ENCODE measurements at regions of chr17 and their contacts with region 1.

Region 1: GRCh38 chr17:50501054-50501453 is 7.2 kb upstream of the MYCBPAP start:
- DNase-seq: peak; percentile 55
- H3K4me3 ChIP-seq: no peak overlapping the region
- H3K27ac ChIP-seq: no peak overlapping the region
- H3K4me1 ChIP-seq: no peaks in the 10 kb centered on the region
- H3K27me3 ChIP-seq: no peaks in the 10 kb centered on the region
- CTCF ChIP-seq: peak; percentile 69
- EP300 ChIP-seq: no peak
- RAD21 ChIP-seq: peak; percentile 53

Region 2: DNA sequence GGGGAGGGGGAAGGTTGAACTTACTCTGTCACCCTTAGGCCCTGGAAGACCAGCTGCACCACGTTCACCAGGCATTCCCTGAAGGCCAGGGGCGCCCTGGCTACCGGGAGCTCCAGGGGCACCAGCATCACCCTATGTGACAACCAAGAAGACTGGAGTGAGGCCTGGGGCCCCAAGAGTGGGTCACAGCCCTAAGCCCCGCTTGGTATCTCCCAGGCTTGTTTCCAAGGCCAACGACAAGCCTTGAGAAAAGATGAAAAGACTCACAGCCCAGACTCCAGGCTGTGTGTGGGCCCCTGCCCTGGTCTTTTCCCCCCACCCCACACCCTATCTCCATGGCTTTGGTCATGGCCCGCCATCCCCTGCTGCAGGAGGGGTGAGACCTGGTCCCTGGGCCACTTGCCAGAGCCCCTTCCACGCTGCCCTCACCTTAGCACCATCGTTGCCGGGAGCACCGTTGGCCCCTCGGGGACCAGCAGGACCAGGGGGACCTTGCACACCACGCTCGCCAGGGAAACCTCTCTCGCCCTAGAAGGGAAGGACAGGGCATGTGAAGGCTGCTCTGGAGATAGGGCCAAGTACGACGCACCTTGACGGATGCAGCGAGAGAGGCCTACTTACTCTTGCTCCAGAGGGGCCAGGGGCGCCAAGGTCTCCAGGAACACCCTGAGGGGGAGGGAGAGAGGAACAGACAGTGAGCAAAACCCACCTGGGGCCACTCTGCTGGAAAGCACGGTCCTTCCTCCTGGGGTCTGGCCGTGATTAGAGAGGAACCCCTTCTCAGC is 309.5 kb before region 1 on chr17:
- CTCF ChIA-PET with region 1: no interaction called
- POLR2A ChIA-PET with region 1: no interaction called
- DNase-seq: no peak
- H3K4me3 ChIP-seq: no peak overlapping the region
- H3K27ac ChIP-seq: peak overlapping the region; percentile 5 to 100; a peak in 3 of 4 replicates
- H3K4me1 ChIP-seq: peaks cover 0 to 29% of the 10 kb centered on the region in 2 experiments; a peak in 2 of 4 replicates
- H3K27me3 ChIP-seq: no peaks in the 10 kb centered on the region
- CTCF ChIP-seq: no peak
- EP300 ChIP-seq: no peak
- RAD21 ChIP-seq: no peak

Region 3: GRCh38 chr17:50318501-50319285 is 182.4 kb before region 1 on chr17:
- CTCF ChIA-PET with region 1: no interaction called
- POLR2A ChIA-PET with region 1: no interaction called
- DNase-seq: no peak
- H3K4me3 ChIP-seq: no peak overlapping the region
- H3K27ac ChIP-seq: no peak overlapping the region
- H3K4me1 ChIP-seq: no peaks in the 10 kb centered on the region; a peak in 1 of 4 replicates
- H3K27me3 ChIP-seq: no peaks in the 10 kb centered on the region
- CTCF ChIP-seq: no peak
- EP300 ChIP-seq: no peak
- RAD21 ChIP-seq: no peak

Region 4: GRCh38 chr17:50361561-50362480 is 139.2 kb before region 1 on chr17:
- CTCF ChIA-PET with region 1: interaction called, 10 read pairs
- POLR2A ChIA-PET with region 1: no interaction called
- DNase-seq: peak; percentile 90
- H3K4me3 ChIP-seq: no peak overlapping the region; a peak in 1 of 4 replicates
- H3K27ac ChIP-seq: peak overlapping the region in 1 of 2 experiments; percentile 59; a peak in 2 of 4 replicates
- H3K4me1 ChIP-seq: peaks cover 9 to 25% of the 10 kb centered on the region in 2 experiments; a peak in 2 of 4 replicates
- H3K27me3 ChIP-seq: no peaks in the 10 kb centered on the region
- CTCF ChIP-seq: peak; percentile 92
- EP300 ChIP-seq: no peak
- RAD21 ChIP-seq: peak; percentile 66

Region 5: DNA sequence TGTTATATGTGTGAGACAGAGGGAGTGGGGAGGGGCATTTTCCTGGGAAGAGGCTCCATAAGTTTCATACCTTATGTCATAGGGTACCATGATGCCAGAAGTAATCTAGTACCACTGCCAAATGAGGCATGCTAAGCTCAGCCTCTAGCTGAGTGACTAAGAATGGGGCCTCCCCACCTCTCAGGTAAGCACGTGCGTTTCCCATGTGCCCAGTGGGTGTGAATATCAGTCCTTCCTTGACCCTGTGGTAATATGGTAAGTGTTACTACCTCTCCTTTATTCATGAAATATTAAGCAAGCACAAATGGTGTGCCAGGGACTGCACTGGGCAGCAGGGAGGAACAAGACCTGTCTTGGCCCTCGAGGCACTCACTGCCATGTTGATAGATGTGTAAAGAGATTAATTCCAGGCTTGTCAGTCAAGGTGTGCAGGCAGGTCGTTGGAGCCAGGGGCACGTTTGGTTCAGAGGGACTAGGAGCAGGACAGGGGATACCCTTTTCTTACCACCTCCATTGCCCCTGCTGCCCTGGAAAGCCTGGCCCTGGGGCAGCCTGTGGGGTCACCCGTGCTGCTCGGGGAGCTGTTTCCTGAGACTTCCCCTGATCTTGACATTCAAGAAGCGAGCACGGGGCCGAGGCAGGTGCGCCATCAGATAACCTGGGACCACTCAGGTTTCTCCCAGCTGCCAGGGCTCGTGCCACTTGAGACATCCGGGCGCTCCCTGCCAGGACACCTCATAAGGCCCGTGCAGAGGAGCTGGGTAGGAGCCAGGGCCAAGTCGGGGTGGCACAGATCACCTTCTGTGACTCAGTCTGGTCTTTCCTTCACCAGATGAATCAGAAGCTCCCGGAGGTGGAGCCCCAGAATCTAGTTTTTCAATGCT is 13.6 kb before region 1 on chr17:
- CTCF ChIA-PET with region 1: interaction called, 183 read pairs
- POLR2A ChIA-PET with region 1: no interaction called
- DNase-seq: no peak
- H3K4me3 ChIP-seq: no peak overlapping the region
- H3K27ac ChIP-seq: no peak overlapping the region
- H3K4me1 ChIP-seq: peaks cover 0 to 12% of the 10 kb centered on the region in 2 experiments; a peak in 3 of 4 replicates
- H3K27me3 ChIP-seq: no peaks in the 10 kb centered on the region
- CTCF ChIP-seq: no peak
- EP300 ChIP-seq: no peak
- RAD21 ChIP-seq: no peak

Region 6: GRCh38 chr17:50518384-50519230 is 17.6 kb after region 1 on chr17:
- CTCF ChIA-PET with region 1: interaction called, 26 read pairs
- POLR2A ChIA-PET with region 1: no interaction called
- DNase-seq: no peak
- H3K4me3 ChIP-seq: no peak overlapping the region
- H3K27ac ChIP-seq: no peak overlapping the region
- H3K4me1 ChIP-seq: peaks cover 0 to 7% of the 10 kb centered on the region in 2 experiments; a peak in 1 of 4 replicates
- H3K27me3 ChIP-seq: no peaks in the 10 kb centered on the region
- CTCF ChIP-seq: no peak
- EP300 ChIP-seq: no peak
- RAD21 ChIP-seq: no peak

Region 7: GRCh38 chr17:50527155-50527762 is 26.2 kb after region 1 on chr17:
- CTCF ChIA-PET with region 1: interaction called, 15 read pairs
- POLR2A ChIA-PET with region 1: no interaction called
- DNase-seq: no peak
- H3K4me3 ChIP-seq: no peak overlapping the region
- H3K27ac ChIP-seq: no peak overlapping the region
- H3K4me1 ChIP-seq: peaks cover 0 to 9% of the 10 kb centered on the region in 2 experiments; a peak in 1 of 4 replicates
- H3K27me3 ChIP-seq: peaks cover 17% of the 10 kb centered on the region; the same call in 1 of the 2 replicates
- CTCF ChIP-seq: no peak
- EP300 ChIP-seq: no peak
- RAD21 ChIP-seq: no peak

Region 8: GRCh38 chr17:50534222-50534978 is 33.3 kb after region 1 on chr17:
- CTCF ChIA-PET with region 1: interaction called, 15 read pairs
- POLR2A ChIA-PET with region 1: no interaction called
- DNase-seq: peak; percentile 62
- H3K4me3 ChIP-seq: no peak overlapping the region
- H3K27ac ChIP-seq: no peak overlapping the region
- H3K4me1 ChIP-seq: peaks cover 7 to 30% of the 10 kb centered on the region in 2 experiments; a peak in 3 of 4 replicates
- H3K27me3 ChIP-seq: peaks cover 28% of the 10 kb centered on the region; the same call in 1 of the 2 replicates
- CTCF ChIP-seq: no peak
- EP300 ChIP-seq: no peak
- RAD21 ChIP-seq: no peak

Region 9: DNA sequence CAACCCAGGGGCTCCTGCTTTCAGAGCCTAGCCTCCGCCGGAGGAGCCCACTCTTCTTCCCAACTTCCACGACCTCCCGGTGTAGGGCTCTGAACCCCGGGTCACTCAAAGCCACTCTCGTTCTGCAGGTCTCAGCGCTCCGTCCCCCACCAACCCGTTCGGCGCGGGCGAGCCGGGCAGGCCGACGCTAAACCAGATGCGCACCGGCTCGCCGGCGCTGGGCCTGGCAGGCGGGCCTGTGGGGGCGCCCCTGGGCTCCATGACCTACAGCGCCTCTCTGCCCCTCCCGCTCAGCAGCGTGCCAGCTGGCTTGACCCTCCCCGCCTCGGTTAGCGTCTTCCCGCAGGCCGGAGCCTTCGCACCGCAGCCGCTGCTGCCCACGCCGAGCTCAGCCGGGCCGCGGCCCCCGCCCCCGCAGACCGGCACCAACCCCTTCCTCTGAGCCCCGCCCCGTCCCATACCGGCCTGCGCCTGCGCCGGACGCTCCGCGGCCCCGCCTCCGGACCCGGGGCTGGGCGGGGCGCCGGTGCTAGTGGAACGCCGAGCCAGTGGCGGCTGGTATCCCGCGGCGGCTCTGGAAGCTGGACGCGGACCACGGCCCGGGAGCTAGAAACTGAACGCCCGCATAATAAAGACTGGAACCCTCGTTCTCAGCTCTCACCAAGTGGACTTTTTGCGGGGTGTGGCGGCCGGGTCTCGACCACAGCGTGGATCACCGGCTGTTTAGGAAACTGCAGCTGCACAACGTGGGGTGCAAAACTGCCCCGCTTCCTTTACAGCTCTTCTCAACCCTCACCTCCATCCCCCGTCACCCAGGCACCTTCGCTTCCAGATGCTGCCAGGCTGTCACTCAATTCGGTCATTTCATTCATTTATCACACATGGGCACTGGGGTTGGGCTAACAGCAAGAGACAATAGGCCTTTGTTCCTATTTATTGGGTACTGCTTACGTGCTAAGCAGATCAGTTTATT is 40.9 kb after region 1 on chr17:
- CTCF ChIA-PET with region 1: interaction called, 13 read pairs
- POLR2A ChIA-PET with region 1: no interaction called
- DNase-seq: peak; percentile 100
- H3K4me3 ChIP-seq: peak overlapping the region; percentile 56 to 61
- H3K27ac ChIP-seq: peak overlapping the region; percentile 34 to 83
- H3K4me1 ChIP-seq: peaks cover 12 to 22% of the 10 kb centered on the region in 2 experiments; a peak in 3 of 4 replicates
- H3K27me3 ChIP-seq: no peaks in the 10 kb centered on the region
- CTCF ChIP-seq: peak; percentile 46
- EP300 ChIP-seq: no peak
- RAD21 ChIP-seq: no peak

Region 10: GRCh38 chr17:50668025-50668837 is 167.2 kb after region 1 on chr17:
- CTCF ChIA-PET with region 1: no interaction called
- POLR2A ChIA-PET with region 1: no interaction called
- DNase-seq: no peak
- H3K4me3 ChIP-seq: no peak overlapping the region
- H3K27ac ChIP-seq: peak overlapping the region in 1 of 2 experiments; percentile 42; a peak in 2 of 4 replicates
- H3K4me1 ChIP-seq: peaks cover 0 to 31% of the 10 kb centered on the region in 2 experiments; a peak in 3 of 4 replicates
- H3K27me3 ChIP-seq: no peaks in the 10 kb centered on the region
- CTCF ChIP-seq: no peak
- EP300 ChIP-seq: peak in 1 of 2 experiments; percentile 42; a peak in 1 of 4 replicates
- RAD21 ChIP-seq: no peak

Measured in SK-N-SH (cell line).